ENCODE measurements at regions of chr20 and their contacts with region 1.

Region 1: GRCh38 chr20:61027218-61027617 is 224.8 kb upstream of the CDH4 start:
- DNase-seq: no peak
- ATAC-seq: no peak

Region 2: DNA sequence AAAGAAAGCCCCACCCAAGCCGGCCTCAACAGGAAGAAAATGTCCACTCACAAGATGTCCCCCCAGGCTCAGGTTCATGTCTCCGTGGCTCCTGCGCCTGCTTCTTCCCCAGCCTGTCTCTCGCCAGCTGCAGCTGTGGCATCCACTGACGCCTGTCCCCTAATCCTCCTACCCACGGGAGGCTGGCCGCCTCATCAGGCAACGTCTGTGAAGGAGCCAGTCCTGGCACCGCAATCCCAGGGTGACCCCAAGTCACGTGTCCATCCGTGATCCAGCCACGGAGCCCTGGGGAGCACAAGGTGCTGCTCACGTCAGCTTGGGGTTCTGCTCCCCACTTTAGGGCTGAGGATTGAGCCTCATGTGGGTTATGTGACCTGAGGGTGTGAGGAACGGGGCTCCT is 428.7 kb before region 1 on chr20:
- intact Hi-C with region 1: no loop called
- DNase-seq: no peak
- ATAC-seq: no peak

Region 3: DNA sequence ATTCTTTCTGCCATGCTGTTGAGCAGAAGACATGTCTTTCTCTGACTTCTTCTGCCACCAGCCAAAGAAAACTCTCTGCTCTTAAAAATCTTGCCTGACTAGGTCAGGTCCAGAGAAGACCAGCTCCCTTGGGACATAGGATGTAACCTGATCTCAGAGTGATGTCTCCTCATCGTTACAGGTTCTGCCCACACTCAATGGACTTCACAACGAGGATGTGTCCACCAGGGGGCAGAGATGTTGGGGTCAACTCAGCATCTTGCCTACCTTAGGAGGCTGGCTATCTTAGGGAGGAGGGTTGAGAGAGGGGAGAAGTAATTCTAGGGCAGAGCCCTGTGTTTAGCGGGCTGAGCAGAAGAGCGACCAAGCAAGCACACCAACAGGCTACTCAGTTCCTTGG is 17.3 kb after region 1 on chr20:
- intact Hi-C with region 1: no loop called
- DNase-seq: no peak
- ATAC-seq: no peak

Region 4: GRCh38 chr20:61055180-61056010 is 28.2 kb after region 1 on chr20:
- intact Hi-C with region 1: loop called (anchors 1 kb)
- DNase-seq: peak; percentile 69
- ATAC-seq: peak; percentile 94

Region 5: DNA sequence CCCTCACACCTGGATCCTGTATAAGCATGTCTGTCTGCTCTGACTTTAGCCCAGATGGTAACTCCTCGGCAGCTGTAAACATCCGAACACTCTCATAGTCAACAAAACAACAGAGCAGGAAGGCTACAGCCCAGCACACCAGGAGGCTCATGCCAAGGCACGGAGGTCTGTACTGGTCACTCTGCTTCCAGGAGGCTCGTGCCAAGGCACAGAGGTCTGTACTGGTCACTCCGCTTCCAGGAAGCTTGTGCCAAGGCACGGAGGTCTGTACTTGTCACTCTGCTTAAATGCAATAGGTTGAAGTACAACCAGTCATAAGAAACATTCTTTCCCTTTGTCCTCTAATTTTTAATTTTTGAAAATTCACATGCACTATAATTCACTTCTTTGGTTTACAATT is 34.8 kb after region 1 on chr20:
- intact Hi-C with region 1: loop called (anchors 1 kb)
- DNase-seq: no peak
- ATAC-seq: no peak

Measured in sciatic nerve (tissue), 2 donors.